Psoas muscle (tissue), 8 donors: ENCODE measurements at regions of chr17 and their contacts with region 1.

Region 1: DNA sequence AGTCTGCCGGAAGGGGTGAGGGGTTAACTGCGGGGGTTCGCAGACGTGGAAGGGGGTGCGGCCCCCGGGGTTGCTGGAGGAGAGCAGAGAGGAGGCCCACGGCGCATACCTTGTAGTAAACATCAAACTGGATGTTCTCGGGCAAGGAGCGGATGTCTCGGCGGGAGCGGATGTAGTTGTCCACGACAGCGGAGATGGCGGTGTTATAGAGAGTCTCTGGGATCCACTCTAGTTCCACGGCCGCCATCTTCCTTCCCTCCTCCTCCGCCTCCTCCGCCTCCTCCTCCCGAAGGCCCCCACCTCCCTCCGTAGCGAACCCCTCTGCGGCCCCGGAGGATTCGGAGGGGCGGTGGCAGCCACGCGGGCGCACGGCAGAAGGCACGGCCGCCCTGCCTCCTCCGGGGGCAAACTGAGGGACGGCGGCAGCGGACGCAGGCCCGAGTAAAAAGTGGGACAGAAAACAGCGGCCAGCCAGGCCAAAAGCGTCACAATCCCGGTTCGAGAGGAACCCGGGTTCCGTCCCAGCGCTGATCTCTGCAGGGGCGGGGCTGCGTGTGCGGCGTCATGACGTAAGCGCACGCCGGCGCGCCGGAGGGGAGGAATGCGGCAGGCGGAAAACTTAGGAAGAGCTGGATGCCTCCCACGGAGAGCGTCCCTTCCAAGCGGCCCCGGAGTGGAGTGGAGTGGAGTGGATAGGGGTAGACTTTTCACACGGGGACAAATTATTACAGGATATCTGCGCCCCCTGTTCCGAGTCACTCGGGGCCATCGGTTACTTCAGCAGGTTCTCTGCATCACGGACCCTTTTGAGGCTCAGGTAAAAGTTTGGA is at the start of gene APPBP2:
- DNase-seq: peak; percentile 87 to 93
- ATAC-seq: peak; percentile 98 to 99 (median 98)
- H3K4me3 ChIP-seq: peak within 1 kb of the TSS; percentile 99
- H3K27ac ChIP-seq: peak within 1 kb of the TSS; percentile 100
- H3K4me1 ChIP-seq: peaks cover 36% of the 10 kb centered on the region
- H3K27me3 ChIP-seq: no peaks in the 10 kb centered on the region
- CTCF ChIP-seq: no peak
- total RNA-seq, gene APPBP2: 20.8 to 31.5 (median 25.8) TPM

Region 2: DNA sequence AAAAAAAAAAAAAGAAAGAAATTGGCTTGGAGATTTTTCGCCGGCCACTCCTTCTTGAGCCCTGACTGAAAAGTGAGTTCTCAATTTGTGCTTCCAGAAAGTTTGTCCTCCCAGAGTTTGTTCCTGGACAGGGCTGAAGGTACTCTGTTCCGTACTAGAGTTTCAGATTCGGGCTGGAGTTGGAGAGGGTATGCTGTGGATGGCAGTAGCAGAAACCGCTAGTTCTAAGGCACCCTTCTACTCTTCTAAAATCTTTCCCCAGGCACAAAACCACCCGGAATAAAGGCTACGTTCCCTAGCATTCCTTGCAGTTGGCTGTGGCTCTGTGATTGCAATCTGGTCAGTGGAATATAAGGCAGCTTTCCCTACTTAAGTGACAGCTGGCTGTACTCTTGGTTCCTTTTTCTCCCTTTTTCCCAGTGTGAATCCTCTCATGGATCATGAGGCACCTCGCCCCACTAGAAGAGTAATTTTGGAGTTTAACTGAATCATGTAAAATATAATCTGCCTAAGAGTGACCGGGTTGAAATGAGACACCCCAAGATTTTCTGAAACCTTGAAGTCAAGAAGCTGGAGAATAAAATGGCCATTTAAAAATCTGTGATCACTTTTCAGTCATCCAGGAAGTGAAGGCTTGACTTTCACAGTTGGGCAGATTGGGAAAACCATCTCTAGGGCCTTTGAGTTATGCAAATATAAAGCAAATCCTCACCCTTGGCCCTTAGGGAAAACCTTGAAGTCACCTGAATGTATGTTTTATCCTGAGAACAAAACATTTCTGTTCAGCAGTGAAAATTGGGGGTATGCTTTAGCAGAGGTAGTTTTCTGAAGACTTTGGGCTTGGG is 446.3 kb before region 1 on chr17:
- intact Hi-C with region 1: loop called in 1 of 2 experiments (anchors 5 kb)
- DNase-seq: no peak
- ATAC-seq: peak in 3 of 4 donors; percentile 43 to 57 (median 45)
- H3K4me3 ChIP-seq: peak overlapping the region; percentile 85
- H3K27ac ChIP-seq: peak overlapping the region; percentile 75
- H3K4me1 ChIP-seq: peaks cover 16% of the 10 kb centered on the region
- H3K27me3 ChIP-seq: no peaks in the 10 kb centered on the region
- CTCF ChIP-seq: no peak

Region 3: GRCh38 chr17:60386147-60387058 is 139.5 kb before region 1 on chr17:
- intact Hi-C with region 1: loop called in 1 of 2 experiments (anchors 5 kb)
- DNase-seq: no peak
- ATAC-seq: no peak
- H3K4me3 ChIP-seq: no peak overlapping the region
- H3K27ac ChIP-seq: no peak overlapping the region
- H3K4me1 ChIP-seq: peaks cover 70% of the 10 kb centered on the region
- H3K27me3 ChIP-seq: no peaks in the 10 kb centered on the region
- CTCF ChIP-seq: no peak

Region 4: GRCh38 chr17:60599620-60600489 is 74.0 kb after region 1 on chr17 and contains the start of gene PPM1D:
- intact Hi-C with region 1: loop called in 1 of 2 experiments (anchors 5 kb)
- DNase-seq: peak; percentile 99 to 100
- ATAC-seq: peak; percentile 96 to 98 (median 97)
- H3K4me3 ChIP-seq: peak within 1 kb of the TSS; percentile 97
- H3K27ac ChIP-seq: peak within 1 kb of the TSS; percentile 95
- H3K4me1 ChIP-seq: peaks cover 21% of the 10 kb centered on the region
- H3K27me3 ChIP-seq: no peaks in the 10 kb centered on the region
- CTCF ChIP-seq: no peak
- total RNA-seq, gene PPM1D: 7.0 to 10.5 (median 8.4) TPM